Tibial artery (tissue), 4 donors: ENCODE measurements at regions of chr16 and their contacts with region 1.

Region 1: DNA sequence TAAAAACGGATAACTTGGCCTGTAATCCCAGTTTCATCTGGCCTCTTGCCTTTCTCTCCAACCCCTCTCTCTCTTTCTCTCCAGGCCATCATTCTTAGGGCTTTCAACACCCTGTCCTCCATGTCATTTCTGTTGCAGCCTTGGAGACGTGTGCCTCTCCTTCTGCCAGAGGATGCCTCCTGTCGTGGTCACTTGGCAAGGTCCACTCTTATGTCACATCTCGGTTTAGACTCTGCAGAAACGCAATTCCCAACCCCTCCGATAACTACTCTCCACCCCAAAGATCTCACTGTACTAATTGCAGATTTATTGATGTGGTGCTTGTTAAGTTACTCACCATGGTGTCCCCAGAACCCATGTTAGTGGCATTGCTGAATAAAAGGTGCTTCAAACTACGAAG is 787.3 kb upstream of the RBFOX1 start:
- DNase-seq: no peak
- H3K4me3 ChIP-seq: no peak overlapping the region
- H3K27ac ChIP-seq: no peak overlapping the region
- H3K4me1 ChIP-seq: no peaks in the 10 kb centered on the region
- H3K27me3 ChIP-seq: no peaks in the 10 kb centered on the region
- CTCF ChIP-seq: no peak

Region 2: DNA sequence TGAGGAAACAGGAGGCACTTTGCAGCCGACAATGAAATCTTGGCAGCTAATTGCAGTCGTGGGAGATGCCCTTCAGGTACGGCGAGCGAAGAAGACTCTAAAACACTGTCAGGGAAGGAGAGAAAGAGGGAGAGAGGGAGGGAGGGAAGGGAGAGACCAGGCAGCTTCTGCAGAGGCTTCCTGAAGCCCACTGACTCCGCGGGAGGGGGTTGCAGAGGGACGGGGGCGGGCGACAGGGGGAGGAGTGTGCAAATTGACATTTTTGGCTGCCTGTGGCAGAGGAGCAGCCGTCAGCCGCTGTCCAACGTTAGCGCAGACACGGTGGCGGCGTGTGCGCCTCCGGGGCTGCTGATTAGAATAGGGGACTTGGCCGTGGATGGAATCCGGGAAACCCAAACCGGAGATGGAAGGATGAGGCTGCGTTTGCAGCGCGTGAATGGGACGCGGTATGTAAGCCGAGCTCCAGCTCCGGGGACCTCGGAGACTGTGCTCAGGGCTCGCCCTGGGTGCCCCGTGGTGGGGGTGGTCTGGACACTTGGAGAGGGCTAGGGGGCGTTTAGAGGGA is 61.8 kb before region 1 on chr16:
- intact Hi-C with region 1: no loop called
- DNase-seq: no peak
- H3K4me3 ChIP-seq: no peak overlapping the region
- H3K27ac ChIP-seq: no peak overlapping the region
- H3K4me1 ChIP-seq: peaks cover 0 to 2% (median 0%) of the 10 kb centered on the region in 4 donors
- H3K27me3 ChIP-seq: peaks cover 0 to 10% of the 10 kb centered on the region in 2 donors
- CTCF ChIP-seq: no peak

Region 3: GRCh38 chr16:6510261-6510660 is 35.1 kb before region 1 on chr16:
- intact Hi-C with region 1: no loop called
- DNase-seq: no peak
- H3K4me3 ChIP-seq: no peak overlapping the region
- H3K27ac ChIP-seq: no peak overlapping the region
- H3K4me1 ChIP-seq: no peaks in the 10 kb centered on the region
- H3K27me3 ChIP-seq: no peaks in the 10 kb centered on the region
- CTCF ChIP-seq: no peak

Region 4: DNA sequence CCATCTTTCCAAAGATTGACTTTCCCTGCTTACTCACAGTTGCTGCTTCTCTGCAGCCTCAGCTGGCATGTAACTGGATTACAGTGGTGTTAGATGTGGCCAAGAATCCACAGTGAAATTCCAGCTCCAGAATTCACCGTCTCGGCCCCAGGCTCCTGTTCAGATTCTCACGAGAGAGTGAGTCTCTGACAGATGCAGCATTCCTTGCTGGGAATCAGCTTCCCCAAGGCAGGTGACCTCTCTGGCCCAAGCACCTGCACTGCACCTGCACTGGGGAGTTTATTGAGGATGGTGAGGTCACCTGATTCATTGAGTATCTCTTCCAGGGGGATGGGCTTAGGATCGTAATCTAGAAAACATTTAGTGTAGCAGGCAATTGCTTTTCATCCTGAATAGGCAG is 186.8 kb after region 1 on chr16:
- intact Hi-C with region 1: loop called (anchors 5 kb)
- DNase-seq: no peak
- H3K4me3 ChIP-seq: no peak overlapping the region
- H3K27ac ChIP-seq: no peak overlapping the region
- H3K4me1 ChIP-seq: no peaks in the 10 kb centered on the region
- H3K27me3 ChIP-seq: no peaks in the 10 kb centered on the region
- CTCF ChIP-seq: no peak